T-cell (primary cell): ENCODE measurements at regions of chr4 and their contacts with region 1.

Region 1: DNA sequence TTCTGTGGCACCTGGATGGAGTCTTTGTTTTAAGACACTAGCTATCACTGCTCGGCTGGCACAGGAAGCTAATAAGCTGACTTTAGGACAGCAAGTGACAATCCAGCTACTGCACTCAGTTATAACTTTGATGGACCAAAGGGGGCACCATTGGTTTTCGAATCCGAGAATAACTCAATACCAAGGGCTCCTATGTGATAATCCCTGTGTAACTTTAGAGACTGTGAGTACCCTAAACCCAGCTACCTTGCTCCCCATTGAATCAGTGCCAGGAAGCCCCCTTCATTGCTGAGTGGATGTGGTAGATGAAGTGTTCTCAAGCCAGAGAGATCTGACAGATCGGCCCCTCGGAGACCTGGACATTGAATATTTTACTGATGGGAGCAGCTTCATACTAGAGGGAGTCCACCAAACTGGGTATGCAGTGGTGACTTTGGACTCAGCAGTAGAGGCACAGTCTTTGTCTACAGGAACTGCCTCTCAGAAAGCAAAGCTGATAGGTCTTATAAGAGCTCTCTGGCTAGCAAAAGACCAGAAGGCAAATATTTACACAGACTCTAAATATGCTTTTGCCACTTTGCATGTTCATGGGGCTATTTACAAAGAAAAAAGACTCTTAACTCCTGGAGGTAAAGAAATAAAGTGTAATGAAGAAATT is 35.5 kb upstream of the UGT2B7 start:
- DNase-seq: no peak
- ATAC-seq: no peak
- H3K4me3 ChIP-seq: no peak overlapping the region
- H3K4me3 Mint-ChIP-seq: no peak overlapping the region
- H3K27ac ChIP-seq: no peak overlapping the region
- H3K27ac Mint-ChIP-seq: no peak overlapping the region
- H3K4me1 ChIP-seq: no peaks in the 10 kb centered on the region
- H3K4me1 Mint-ChIP-seq: no peaks in the 10 kb centered on the region
- H3K27me3 ChIP-seq: peaks cover 0 to 2% of the 10 kb centered on the region in 2 experiments
- H3K27me3 Mint-ChIP-seq: no peaks in the 10 kb centered on the region

Region 2: DNA sequence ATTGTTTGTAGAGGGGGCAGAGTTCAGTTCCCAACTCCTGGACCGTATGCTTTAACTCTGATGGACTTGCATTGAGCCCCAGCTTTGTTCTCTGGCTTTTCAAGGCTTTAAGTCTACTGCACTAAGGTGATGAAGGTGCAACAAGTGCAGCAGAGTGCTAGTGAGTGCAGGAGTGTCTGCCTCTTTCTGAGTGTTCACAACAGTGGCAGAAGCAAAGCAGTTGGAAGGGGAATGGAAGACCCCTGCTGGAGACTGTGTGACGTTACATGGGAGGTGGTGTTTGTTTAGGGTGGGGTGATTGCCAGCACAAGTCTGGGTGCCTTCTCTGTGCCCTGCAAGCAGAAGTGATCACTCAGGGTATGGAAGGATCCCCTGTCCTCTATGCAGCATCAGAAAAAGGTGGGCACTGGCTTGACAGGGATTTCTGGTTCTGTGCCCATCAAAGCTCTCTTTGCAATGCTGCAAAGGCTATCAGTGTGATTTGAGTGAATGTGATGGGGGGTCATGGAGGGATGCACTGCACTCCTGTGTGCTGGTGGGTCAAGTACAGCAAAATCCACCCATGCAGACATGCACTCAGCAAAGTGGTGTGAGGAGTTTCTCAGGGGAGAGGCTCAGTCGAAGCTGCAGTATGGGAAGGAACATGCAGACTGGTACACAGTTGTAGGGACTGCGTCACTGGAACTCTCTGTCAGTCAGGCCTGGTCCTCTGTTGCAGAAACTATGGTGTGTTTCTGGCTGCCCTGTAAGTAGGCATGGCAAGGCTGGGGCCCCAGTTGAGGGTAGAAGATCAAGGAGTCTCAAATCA is 35.4 kb before region 1 on chr4:
- CTCF ChIA-PET with region 1: no interaction called
- POLR2A ChIA-PET with region 1: interaction called in 1 of 2 experiments, 10 read pairs
- DNase-seq: no peak
- ATAC-seq: peak in 1 of 4 experiments; percentile 17
- H3K4me3 ChIP-seq: no peak overlapping the region
- H3K4me3 Mint-ChIP-seq: no peak overlapping the region
- H3K27ac ChIP-seq: no peak overlapping the region
- H3K27ac Mint-ChIP-seq: no peak overlapping the region
- H3K4me1 ChIP-seq: no peaks in the 10 kb centered on the region
- H3K4me1 Mint-ChIP-seq: no peaks in the 10 kb centered on the region
- H3K27me3 ChIP-seq: no peaks in the 10 kb centered on the region
- H3K27me3 Mint-ChIP-seq: peaks cover 0 to 1% of the 10 kb centered on the region in 2 donors